ENCODE measurements at regions of chr9 and their contacts with region 1.

Region 1: DNA sequence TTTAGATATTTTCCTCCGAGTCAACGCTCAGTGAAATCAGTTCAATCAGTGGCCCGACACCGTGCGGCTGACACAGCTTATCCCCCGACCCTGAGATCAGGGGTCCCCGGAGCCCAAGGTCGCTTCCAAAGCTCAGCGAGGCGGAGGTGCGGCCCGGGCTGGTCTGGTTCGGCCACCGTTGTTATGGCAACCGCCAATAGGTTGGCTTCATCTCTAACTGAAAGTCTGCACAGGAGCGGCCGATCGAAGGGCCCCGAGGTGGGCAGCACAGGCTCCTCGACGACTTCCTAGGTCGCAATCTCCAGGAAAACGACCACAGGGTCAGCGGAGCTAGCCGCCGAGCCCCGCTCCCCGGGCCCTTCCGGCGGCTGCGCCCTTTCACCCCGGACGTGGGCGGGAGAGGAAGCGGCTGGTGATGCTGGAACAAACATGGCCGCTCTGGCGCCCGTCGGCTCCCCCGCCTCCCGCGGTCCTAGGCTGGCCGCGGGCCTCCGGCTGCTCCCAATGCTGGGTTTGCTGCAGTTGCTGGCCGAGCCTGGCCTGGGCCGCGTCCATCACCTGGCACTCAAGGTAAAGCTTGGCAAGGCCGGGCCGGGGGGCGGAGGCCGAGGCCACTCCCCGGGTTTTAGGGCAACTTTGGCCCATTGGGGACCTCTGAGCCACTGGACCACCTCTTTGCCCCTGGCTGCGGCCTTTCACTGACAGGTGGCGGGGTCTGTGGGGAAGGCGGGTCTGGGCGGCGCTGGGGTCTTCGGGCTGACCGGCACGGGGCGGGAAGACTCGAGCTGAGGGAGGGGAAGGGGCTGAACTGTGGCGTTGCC is at the start of gene GPR107:
- DNase-seq: peak; percentile 82
- H3K4me3 Mint-ChIP-seq: peak within 1 kb of the TSS; percentile 92
- H3K27ac Mint-ChIP-seq: peak within 1 kb of the TSS; percentile 91
- H3K4me1 Mint-ChIP-seq: peaks cover 42% of the 10 kb centered on the region
- H3K27me3 Mint-ChIP-seq: no peaks in the 10 kb centered on the region
- total RNA-seq, gene GPR107: 25.1 to 26.3 TPM

Region 2: DNA sequence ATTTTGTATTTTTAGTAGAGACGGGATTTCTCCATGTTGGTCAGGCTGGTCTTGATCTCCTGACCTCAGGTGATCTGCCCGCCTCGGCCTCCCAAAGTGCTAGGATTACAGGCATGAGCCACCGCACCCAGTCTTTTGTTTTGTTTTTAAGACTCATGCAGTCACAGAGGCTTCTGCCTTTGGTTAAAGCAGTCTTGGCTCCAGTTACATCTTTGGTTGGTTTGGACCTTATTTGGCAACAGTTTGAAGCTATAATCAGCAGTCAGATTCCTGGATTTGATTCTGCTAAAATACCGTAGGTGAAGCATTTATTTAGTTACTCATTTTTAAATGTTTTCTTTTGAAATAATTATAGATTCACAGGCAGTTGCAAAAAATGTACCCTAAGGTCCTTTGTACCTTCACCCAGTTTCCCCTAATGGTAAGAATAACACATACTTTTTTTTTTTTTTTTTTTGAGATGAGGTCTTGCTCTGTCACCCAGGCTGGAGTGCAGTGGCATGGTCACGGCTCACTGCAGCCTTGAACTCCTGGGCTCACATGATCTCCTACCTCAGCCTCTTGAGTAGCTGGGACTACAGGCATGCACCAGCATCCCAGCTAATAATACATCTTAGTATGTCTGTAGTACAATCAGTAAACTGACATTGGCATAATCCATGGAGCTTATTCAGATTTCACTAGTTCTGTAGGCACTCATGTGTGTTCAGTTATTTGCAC is 202.7 kb before region 1 on chr9:
- CTCF ChIA-PET with region 1: no interaction called
- POLR2A ChIA-PET with region 1: no interaction called
- DNase-seq: no peak
- H3K4me3 Mint-ChIP-seq: no peak overlapping the region
- H3K27ac Mint-ChIP-seq: no peak overlapping the region
- H3K4me1 Mint-ChIP-seq: peaks cover 29% of the 10 kb centered on the region
- H3K27me3 Mint-ChIP-seq: no peaks in the 10 kb centered on the region

Region 3: DNA sequence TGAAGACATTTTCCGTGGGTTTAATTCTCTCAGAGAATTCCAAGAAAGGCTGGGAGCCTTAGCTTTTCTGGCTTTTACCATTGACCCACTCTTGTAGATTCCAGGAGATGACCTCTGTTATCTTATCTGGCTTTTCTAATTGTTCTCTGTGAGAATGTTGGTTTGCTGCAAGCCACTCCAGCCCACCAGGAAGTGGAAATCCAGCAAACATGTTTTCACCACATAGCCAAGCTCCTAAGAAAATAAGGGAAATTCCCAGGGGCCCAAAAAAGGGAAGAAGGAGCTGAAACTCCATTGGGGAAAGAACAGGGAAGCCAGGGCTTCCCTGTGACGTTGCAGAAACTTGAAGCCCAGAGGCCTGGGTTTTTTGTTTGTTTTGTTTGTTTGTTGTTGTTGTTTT is 19.7 kb after region 1 on chr9:
- CTCF ChIA-PET with region 1: no interaction called
- POLR2A ChIA-PET with region 1: interaction called, 10 read pairs
- DNase-seq: no peak
- H3K4me3 Mint-ChIP-seq: no peak overlapping the region
- H3K27ac Mint-ChIP-seq: no peak overlapping the region
- H3K4me1 Mint-ChIP-seq: peaks cover 24% of the 10 kb centered on the region
- H3K27me3 Mint-ChIP-seq: no peaks in the 10 kb centered on the region

Region 4: DNA sequence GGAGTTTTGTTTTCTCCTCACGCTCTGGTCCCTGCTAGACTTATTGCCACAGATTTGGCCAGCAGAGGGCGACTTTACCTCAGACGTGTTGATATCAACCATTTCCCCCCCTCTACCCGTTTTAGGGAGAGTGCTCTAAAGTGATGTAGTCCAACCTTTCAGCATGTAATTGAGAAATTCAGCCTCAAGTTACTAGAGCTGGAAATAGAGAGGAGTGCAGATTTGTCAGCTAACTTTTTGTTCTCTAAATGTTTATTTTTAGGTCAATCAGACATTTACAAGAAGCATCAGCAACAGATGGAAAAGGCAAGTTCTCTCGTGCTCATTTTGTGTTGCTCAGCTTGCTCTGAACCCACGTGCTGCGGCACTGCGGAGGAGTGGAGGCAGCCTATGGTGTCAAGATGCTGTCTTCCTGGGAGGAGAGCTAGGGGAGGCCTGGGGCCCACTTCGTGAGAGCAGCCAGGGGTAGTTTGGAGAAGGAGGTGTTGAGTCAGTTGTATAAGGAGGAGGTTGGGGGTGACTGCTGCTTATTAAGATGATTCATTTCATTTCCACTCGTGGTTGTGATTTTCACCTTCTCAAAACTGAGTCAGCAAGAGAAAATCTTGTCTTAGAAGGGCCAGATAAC is 53.6 kb after region 1 on chr9:
- CTCF ChIA-PET with region 1: no interaction called
- POLR2A ChIA-PET with region 1: no interaction called
- DNase-seq: peak; percentile 85
- H3K4me3 Mint-ChIP-seq: no peak overlapping the region
- H3K27ac Mint-ChIP-seq: peak overlapping the region; percentile 47
- H3K4me1 Mint-ChIP-seq: peaks cover 37% of the 10 kb centered on the region
- H3K27me3 Mint-ChIP-seq: no peaks in the 10 kb centered on the region

Region 5: DNA sequence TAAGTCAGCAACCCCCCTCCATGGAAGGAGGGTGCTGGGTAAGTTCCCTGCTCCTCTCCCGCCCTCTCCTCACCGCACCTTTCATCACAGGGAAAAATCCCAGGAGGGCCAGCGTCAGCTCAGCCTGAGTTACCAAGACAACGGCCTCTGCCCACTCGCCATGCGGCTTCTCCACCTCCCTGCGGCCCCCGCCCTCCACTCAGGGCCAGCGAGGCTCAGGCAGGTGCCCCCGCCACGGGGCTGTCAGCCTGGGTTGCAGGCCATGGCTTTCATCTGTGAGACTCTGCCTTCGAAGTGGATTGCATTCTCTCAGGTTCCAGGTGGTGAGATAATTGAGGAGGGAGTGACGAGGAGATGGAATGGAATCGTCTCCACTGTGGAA is 928.0 kb after region 1 on chr9:
- CTCF ChIA-PET with region 1: no interaction called
- POLR2A ChIA-PET with region 1: no interaction called
- DNase-seq: no peak
- H3K4me3 Mint-ChIP-seq: no peak overlapping the region
- H3K27ac Mint-ChIP-seq: no peak overlapping the region
- H3K4me1 Mint-ChIP-seq: no peaks in the 10 kb centered on the region
- H3K27me3 Mint-ChIP-seq: peaks cover 5% of the 10 kb centered on the region

Measured in activated CD4-positive, alpha-beta memory T cell treated with anti-CD3 and anti-CD28 coated beads, Interleukin-2, amount 10 ng/mL, durations not matched to agents 7 days and 5 days (primary cell).